GM12878 (cell line): ENCODE measurements at regions of chr3 and their contacts with region 1.

Region 1: GRCh38 chr3:40329071-40329470 is 19.6 kb downstream of the EIF1B start:
- DNase-seq: no peak
- ATAC-seq: no peak
- H3K4me3 ChIP-seq: no peak overlapping the region
- H3K27ac ChIP-seq: no peak overlapping the region
- H3K4me1 ChIP-seq: peaks cover 4% of the 10 kb centered on the region; the same call in 1 of the 2 replicates
- H3K27me3 ChIP-seq: no peaks in the 10 kb centered on the region; a peak in 1 of 4 replicates
- CTCF ChIP-seq: no peak
- EP300 ChIP-seq: no peak
- POLR2A ChIP-seq: no peak
- RAD21 ChIP-seq: no peak

Region 2: GRCh38 chr3:40099871-40100270 is 229.2 kb before region 1 on chr3:
- CTCF ChIA-PET with region 1: no interaction called
- POLR2A ChIA-PET with region 1: no interaction called
- RAD21 ChIA-PET with region 1: no interaction called
- SMC1A ChIA-PET with region 1: no interaction called
- in situ Hi-C with region 1: no loop called
- intact Hi-C with region 1: no loop called
- DNase-seq: no peak
- ATAC-seq: no peak
- H3K4me3 ChIP-seq: no peak overlapping the region
- H3K27ac ChIP-seq: no peak overlapping the region
- H3K4me1 ChIP-seq: no peaks in the 10 kb centered on the region
- H3K27me3 ChIP-seq: no peaks in the 10 kb centered on the region; a peak in 1 of 4 replicates
- CTCF ChIP-seq: no peak
- EP300 ChIP-seq: no peak
- POLR2A ChIP-seq: no peak
- RAD21 ChIP-seq: no peak

Region 3: DNA sequence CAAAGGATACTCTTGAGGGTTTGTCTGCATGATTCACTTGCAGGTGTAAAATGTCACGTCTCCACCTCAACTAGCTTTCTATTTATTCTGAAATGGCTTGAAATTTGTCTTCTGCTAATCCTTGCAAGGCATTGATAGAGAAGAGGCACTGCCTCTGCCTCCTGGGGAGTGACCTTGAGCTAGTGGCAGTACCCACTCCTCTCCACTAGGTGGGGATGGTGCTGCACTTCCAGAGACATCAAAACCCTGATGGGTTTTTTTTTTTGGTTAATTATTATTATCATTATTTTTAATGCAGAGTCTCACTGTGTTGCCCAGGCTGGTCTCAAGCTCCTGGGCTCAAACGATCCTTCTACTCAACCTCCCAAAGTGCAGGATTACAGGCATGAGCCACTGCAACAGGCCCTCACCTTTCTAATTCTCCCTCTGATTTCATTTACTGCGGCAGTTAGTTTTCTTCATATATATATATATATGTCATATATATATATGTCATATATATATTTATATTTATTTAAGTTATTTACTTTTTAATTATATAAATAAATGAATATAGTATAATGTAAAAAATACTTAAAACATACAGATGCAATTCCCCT is 137.1 kb before region 1 on chr3:
- CTCF ChIA-PET with region 1: interaction called, 14 read pairs
- POLR2A ChIA-PET with region 1: no interaction called
- RAD21 ChIA-PET with region 1: no interaction called
- SMC1A ChIA-PET with region 1: interaction called, 3 read pairs
- in situ Hi-C with region 1: no loop called
- intact Hi-C with region 1: no loop called
- DNase-seq: no peak
- ATAC-seq: peak; percentile 75
- H3K4me3 ChIP-seq: no peak overlapping the region
- H3K27ac ChIP-seq: no peak overlapping the region
- H3K4me1 ChIP-seq: peaks cover 18% of the 10 kb centered on the region
- H3K27me3 ChIP-seq: no peaks in the 10 kb centered on the region
- CTCF ChIP-seq: peak; percentile 86 to 95 (median 89)
- EP300 ChIP-seq: no peak
- POLR2A ChIP-seq: no peak
- RAD21 ChIP-seq: peak; percentile 89

Region 4: DNA sequence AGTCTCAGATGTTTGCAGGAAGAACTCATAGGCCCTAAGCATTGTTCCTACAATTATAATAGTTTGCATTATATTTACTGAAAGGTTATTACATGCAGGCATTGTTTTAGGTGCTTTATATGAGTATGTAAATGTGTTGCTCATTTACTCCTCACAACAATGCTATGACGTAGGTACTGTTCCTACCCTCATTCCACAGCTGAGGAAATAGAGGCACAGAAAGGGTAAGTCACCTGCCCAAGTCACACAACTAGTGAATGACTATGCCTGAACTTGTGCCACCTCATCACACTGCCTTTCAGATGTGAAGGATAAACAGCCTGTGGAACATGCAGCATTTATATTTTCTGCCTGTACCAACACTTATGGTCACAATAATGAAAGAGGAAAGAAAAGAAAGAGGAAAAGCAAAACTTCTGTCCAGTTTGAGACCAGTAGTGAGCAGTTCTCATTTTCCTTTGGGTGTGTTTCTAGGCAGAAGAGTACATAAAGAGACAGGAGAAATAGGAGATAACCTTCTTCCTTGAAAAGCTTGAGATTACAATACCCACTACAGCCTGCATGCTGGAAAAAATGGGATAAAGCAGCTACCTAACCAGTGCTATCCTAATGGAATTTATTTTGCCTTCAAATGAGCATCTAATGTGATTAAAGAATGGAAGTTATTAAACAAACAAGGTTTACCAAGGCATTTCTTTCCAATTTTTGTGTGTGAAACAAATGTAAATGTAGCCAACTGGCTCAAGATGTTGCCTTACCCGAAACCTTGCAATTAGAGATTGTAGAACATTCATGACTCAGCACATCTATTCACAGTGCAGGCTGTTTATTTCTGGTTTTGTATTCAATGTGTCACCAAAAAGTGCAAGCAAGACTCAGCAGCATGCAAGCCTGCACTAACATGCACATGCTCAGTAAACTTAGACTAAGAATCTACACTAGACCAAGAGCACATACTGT is 37.4 kb after region 1 on chr3:
- CTCF ChIA-PET with region 1: no interaction called
- POLR2A ChIA-PET with region 1: no interaction called
- RAD21 ChIA-PET with region 1: no interaction called
- SMC1A ChIA-PET with region 1: no interaction called
- in situ Hi-C with region 1: no loop called
- intact Hi-C with region 1: no loop called
- DNase-seq: no peak
- ATAC-seq: no peak
- H3K4me3 ChIP-seq: no peak overlapping the region
- H3K27ac ChIP-seq: no peak overlapping the region
- H3K4me1 ChIP-seq: no peaks in the 10 kb centered on the region
- H3K27me3 ChIP-seq: peaks cover 0 to 2% of the 10 kb centered on the region in 2 experiments; a peak in 1 of 4 replicates
- CTCF ChIP-seq: no peak
- EP300 ChIP-seq: no peak
- POLR2A ChIP-seq: no peak
- RAD21 ChIP-seq: no peak

Region 5: DNA sequence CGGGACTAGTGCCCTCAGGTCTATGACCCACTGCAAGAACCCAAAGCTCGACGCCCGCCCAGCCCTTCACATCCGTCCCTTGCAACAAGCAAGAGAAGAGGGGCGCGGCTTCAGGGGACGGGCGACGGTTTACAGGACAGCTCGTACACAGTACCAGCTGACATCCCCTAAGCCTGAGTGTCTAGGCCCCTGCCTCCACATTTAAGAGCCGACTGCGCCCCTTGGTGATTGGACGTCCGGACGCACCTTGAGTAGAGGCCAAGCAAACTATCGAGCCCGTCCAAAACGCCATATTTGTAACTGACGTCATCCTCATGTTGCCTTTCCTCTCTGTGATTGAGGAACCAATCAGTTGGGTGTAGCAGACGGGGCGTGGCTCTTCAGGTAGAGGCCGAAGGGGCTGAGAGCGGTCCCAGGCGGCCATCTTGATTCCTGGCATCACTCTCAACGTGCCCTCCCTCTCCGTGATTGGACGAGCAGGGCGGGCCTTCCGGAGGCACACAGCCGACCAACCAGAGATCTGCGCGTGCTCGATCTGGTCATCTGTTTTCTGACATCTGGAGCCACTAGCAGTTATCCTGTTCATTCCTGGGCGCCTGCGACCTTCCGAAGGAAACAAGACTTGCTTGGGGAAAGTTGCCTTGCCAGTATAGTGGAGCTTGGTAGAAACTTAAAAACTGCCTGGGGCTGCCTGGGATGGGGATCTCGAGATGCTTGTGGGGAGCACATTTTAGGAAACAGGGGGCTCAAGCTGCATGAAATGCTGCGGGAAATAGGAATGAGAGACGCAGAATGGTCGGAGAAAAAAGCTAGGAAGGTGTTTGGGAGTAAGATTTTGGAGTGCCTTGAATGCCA is 124.0 kb after region 1 on chr3:
- CTCF ChIA-PET with region 1: interaction called, 3 read pairs
- POLR2A ChIA-PET with region 1: no interaction called
- RAD21 ChIA-PET with region 1: no interaction called
- SMC1A ChIA-PET with region 1: interaction called, 3 read pairs
- in situ Hi-C with region 1: no loop called
- intact Hi-C with region 1: loop called (anchors 5 kb)
- DNase-seq: peak; percentile 93
- ATAC-seq: peak; percentile 95
- H3K4me3 ChIP-seq: peak overlapping the region; percentile 82
- H3K27ac ChIP-seq: peak overlapping the region; percentile 81
- H3K4me1 ChIP-seq: no peaks in the 10 kb centered on the region; the same call in 1 of the 2 replicates
- H3K27me3 ChIP-seq: no peaks in the 10 kb centered on the region
- CTCF ChIP-seq: no peak
- EP300 ChIP-seq: no peak
- POLR2A ChIP-seq: peak; percentile 87
- RAD21 ChIP-seq: no peak

Region 6: DNA sequence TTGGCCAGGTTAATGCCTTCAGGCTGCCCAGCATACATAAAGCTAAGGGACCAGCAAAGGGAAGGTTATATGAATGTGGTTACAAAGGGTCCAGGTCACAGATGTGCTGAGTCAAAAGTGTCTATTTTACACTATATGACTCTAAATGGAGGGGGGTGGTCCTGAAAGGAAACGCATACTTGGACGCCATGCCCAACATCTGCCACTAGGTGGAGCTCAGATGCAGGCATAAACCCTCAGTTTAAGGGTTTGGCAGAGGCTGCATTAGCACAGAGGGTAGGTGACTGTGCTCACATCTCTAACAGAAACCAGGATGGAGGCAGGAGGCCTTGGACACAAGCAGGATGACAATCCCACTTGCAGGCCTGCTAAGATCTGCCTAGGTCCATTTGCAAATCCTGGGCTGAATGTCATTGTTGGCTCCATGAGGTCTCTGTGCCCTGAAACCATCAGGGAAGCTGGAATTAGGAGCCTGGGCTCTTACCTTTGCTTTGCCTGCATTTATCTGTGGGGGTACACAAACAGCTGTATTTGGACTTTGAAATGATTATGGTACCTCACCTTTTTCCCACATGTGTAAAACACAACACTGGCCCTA is 251.5 kb after region 1 on chr3:
- CTCF ChIA-PET with region 1: interaction called, 16 read pairs
- POLR2A ChIA-PET with region 1: no interaction called
- RAD21 ChIA-PET with region 1: interaction called, 5 read pairs
- SMC1A ChIA-PET with region 1: interaction called, 8 read pairs
- in situ Hi-C with region 1: loop called (anchors 5 kb)
- intact Hi-C with region 1: loop called (anchors 1 kb)
- DNase-seq: no peak
- ATAC-seq: peak; percentile 85
- H3K4me3 ChIP-seq: no peak overlapping the region
- H3K27ac ChIP-seq: no peak overlapping the region
- H3K4me1 ChIP-seq: no peaks in the 10 kb centered on the region
- H3K27me3 ChIP-seq: no peaks in the 10 kb centered on the region; a peak in 2 of 4 replicates
- CTCF ChIP-seq: peak; percentile 91 to 96 (median 93); a peak in 5 of 6 replicates
- EP300 ChIP-seq: no peak
- POLR2A ChIP-seq: no peak
- RAD21 ChIP-seq: peak; percentile 99

Region 7: DNA sequence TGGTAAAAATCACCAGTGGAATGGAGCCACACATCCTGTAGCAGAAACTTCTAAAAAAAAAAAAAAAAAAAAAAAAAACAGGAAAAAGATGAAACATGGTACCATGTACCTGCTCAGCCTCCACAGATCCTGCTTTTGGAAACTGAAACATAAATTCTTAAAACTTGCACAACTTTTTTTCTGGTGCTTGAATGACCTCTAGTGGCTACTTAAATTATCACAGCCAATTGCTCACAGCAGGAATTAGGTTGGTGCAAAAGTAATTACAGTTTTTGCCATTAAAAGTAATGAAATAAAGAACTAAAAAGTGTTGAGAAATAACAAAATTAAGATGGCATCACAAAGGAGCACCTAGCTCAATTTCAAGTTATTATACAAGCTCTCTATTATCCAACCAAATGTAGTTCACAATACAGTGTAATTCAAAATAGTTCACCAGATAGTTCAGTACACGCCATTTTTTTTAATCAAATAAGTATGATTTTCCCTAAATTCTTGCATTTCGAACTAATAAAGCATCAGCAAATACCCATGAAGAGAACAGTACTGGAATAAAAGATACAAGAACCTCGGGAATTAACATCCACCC is 1552.3 kb after region 1 on chr3:
- CTCF ChIA-PET with region 1: interaction called, 7 read pairs
- POLR2A ChIA-PET with region 1: no interaction called
- RAD21 ChIA-PET with region 1: interaction called, 6 read pairs
- SMC1A ChIA-PET with region 1: no interaction called
- in situ Hi-C with region 1: loop called (anchors 5 kb)
- intact Hi-C with region 1: loop called (anchors 5 kb)
- DNase-seq: no peak
- ATAC-seq: no peak
- H3K4me3 ChIP-seq: no peak overlapping the region
- H3K27ac ChIP-seq: no peak overlapping the region
- H3K4me1 ChIP-seq: no peaks in the 10 kb centered on the region
- H3K27me3 ChIP-seq: no peaks in the 10 kb centered on the region
- CTCF ChIP-seq: peak; percentile 44 to 58 (median 57); a peak in 5 of 6 replicates
- EP300 ChIP-seq: no peak
- POLR2A ChIP-seq: no peak
- RAD21 ChIP-seq: peak; percentile 81